HCT116 (cell line): ENCODE measurements at regions of chr11 and their contacts with region 1.

Region 1: DNA sequence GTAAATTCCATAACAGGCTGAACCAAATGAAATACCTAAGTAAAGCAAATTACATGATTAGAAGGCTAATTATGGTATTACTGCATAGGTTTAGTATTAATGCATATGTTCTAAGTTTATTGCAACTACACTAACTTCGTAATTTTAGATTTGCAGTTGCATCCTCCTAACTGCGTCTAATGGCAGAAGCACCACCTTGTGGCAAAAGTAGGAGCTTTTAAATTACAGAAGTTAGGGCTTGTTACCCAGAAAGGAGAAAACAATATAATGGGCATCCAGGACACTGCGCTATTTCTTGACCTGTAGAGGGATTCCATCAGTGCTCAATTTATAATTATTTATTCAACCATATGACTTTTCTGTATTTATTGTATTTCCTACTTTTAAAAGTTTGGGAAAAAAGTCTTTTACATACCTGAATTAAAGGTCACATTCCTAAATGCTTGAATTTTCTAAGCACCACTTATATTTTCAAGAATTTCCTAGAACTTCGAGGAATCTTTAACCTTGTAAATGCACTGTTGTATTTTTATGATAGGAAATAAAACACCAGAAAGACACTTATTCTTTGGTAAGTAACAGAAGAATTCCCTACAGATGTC is 16.3 kb upstream of the GPR83 start:
- DNase-seq: peak; percentile 2
- ATAC-seq: peak; percentile 67
- H3K4me3 ChIP-seq: no peak overlapping the region
- H3K27ac ChIP-seq: no peak overlapping the region
- H3K4me1 ChIP-seq: no peaks in the 10 kb centered on the region
- H3K27me3 ChIP-seq: no peaks in the 10 kb centered on the region
- CTCF ChIP-seq: peak; percentile 39 to 55 (median 52); a peak in 5 of 6 replicates
- POLR2A ChIP-seq: no peak
- RAD21 ChIP-seq: peak; percentile 56

Region 2: GRCh38 chr11:94325681-94326080 is 91.8 kb before region 1 on chr11:
- CTCF ChIA-PET with region 1: no interaction called
- POLR2A ChIA-PET with region 1: no interaction called
- RAD21 ChIA-PET with region 1: no interaction called
- intact Hi-C with region 1: loop called (anchors 2 kb)
- DNase-seq: peak; percentile 41
- ATAC-seq: peak; percentile 94
- H3K4me3 ChIP-seq: no peak overlapping the region
- H3K27ac ChIP-seq: no peak overlapping the region
- H3K4me1 ChIP-seq: no peaks in the 10 kb centered on the region; a peak in 1 of 4 replicates
- H3K27me3 ChIP-seq: no peaks in the 10 kb centered on the region
- CTCF ChIP-seq: peak; percentile 45 to 83 (median 72); a peak in 5 of 6 replicates
- POLR2A ChIP-seq: no peak
- RAD21 ChIP-seq: peak; percentile 75